ENCODE measurements at regions of chr6 and their contacts with region 1.

Region 1: GRCh38 chr6:70667711-70668498 is at the start of gene SMAP1:
- DNase-seq: peak; percentile 65 to 95
- H3K4me3 ChIP-seq: peak within 1 kb of the TSS; percentile 82 to 97
- H3K27ac ChIP-seq: peak within 1 kb of the TSS; percentile 91 to 92
- H3K4me1 ChIP-seq: no peaks in the 10 kb centered on the region
- H3K27me3 ChIP-seq: no peaks in the 10 kb centered on the region
- CTCF ChIP-seq: no peak
- total RNA-seq, gene SMAP1: 13.2 TPM

Region 2: DNA sequence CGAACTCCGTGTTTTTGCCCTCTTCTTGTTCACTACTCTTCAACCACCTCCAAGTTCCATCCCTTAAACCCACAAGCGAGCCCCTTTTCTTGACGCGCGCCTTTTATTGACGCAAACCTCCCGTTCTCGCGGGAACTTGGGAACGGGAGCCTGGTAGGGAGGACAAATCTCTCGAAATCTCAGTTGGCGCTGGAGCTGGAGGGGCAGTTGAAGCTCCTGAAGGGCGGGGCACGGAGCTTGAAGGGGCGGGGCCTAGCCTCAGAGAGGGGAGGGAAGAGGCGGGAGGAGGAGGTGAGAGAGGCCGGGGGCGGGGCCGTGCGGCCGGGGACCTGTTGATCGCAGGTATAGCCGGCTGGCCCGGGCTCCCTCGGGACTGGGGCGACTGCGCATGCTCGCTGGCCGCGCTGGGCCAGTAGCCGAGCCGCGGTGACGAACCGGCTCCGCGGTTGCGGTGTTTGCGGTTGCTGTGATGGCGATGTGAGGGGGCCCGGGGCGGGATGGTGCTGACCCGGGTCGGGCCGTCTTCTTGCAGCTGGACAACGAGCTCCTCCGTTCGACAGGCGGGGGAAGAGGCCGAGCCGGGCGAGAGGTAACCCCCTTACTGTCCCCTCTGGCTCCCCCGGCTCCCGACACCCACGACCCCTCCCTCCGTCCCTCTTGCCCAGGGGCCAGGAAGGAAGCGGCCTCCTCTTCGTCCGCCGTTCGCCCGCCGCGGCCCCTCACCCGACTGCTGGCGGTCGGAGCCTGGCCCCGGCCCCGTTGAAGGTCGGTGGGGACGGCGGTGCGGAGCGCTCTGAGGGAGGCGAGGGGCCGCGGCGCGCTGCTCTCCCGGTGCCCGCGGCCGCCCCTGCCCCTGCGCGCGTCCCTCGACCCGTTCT is 254.6 kb before region 1 on chr6 and contains the start of gene FAM135A:
- intact Hi-C with region 1: loop called (anchors 2 kb)
- DNase-seq: peak; percentile 92 to 99
- H3K4me3 ChIP-seq: peak within 1 kb of the TSS; percentile 67 to 95
- H3K27ac ChIP-seq: peak within 1 kb of the TSS; percentile 89 to 94
- H3K4me1 ChIP-seq: peaks cover 0 to 5% of the 10 kb centered on the region in 2 donors
- H3K27me3 ChIP-seq: no peaks in the 10 kb centered on the region
- CTCF ChIP-seq: no peak
- total RNA-seq, gene FAM135A: 10.7 TPM

Region 3: GRCh38 chr6:70566751-70567382 is 101.0 kb before region 1 on chr6 and contains the start of gene SDHAF4:
- intact Hi-C with region 1: loop called (anchors 1 kb)
- DNase-seq: peak; percentile 61 to 95
- H3K4me3 ChIP-seq: peak within 1 kb of the TSS; percentile 91 to 94
- H3K27ac ChIP-seq: peak within 1 kb of the TSS; percentile 80 to 88
- H3K4me1 ChIP-seq: no peaks in the 10 kb centered on the region
- H3K27me3 ChIP-seq: no peaks in the 10 kb centered on the region
- CTCF ChIP-seq: peak in 1 of 3 experiments; percentile 21
- total RNA-seq, gene SDHAF4: 3.5 TPM

Region 4: GRCh38 chr6:70638468-70638867 is 29.4 kb before region 1 on chr6:
- intact Hi-C with region 1: no loop called
- DNase-seq: no peak
- H3K4me3 ChIP-seq: no peak overlapping the region
- H3K27ac ChIP-seq: no peak overlapping the region
- H3K4me1 ChIP-seq: no peaks in the 10 kb centered on the region
- H3K27me3 ChIP-seq: no peaks in the 10 kb centered on the region
- CTCF ChIP-seq: no peak